Breast epithelium (tissue), 4 donors: ENCODE measurements at regions of chr1 and their contacts with region 1.

Region 1: GRCh38 chr1:167687919-167688519 is 33.8 kb upstream of the MPZL1 start:
- DNase-seq: peak; percentile 62 to 69
- H3K4me3 ChIP-seq: no peak overlapping the region
- H3K27ac ChIP-seq: no peak overlapping the region
- H3K4me1 ChIP-seq: peaks cover 0 to 6% of the 10 kb centered on the region in 2 donors
- H3K27me3 ChIP-seq: no peaks in the 10 kb centered on the region
- CTCF ChIP-seq: peak; percentile 74 to 90 (median 87)
- POLR2A ChIP-seq: no peak

Region 2: GRCh38 chr1:167599957-167600581 is 88.0 kb before region 1 on chr1:
- intact Hi-C with region 1: loop called (anchors 5 kb)
- DNase-seq: peak in 1 of 2 donors; percentile 73
- H3K4me3 ChIP-seq: no peak overlapping the region
- H3K27ac ChIP-seq: no peak overlapping the region
- H3K4me1 ChIP-seq: peaks cover 7 to 9% of the 10 kb centered on the region in 2 donors
- H3K27me3 ChIP-seq: no peaks in the 10 kb centered on the region
- CTCF ChIP-seq: peak in 2 of 3 donors; percentile 41 to 53
- POLR2A ChIP-seq: no peak

Region 3: GRCh38 chr1:167669209-167670124 is 18.6 kb before region 1 on chr1:
- intact Hi-C with region 1: no loop called
- DNase-seq: no peak
- H3K4me3 ChIP-seq: no peak overlapping the region
- H3K27ac ChIP-seq: no peak overlapping the region
- H3K4me1 ChIP-seq: peaks cover 0 to 3% of the 10 kb centered on the region in 2 donors
- H3K27me3 ChIP-seq: no peaks in the 10 kb centered on the region
- CTCF ChIP-seq: no peak
- POLR2A ChIP-seq: no peak

Region 4: GRCh38 chr1:167713330-167714081 is 25.5 kb after region 1 on chr1:
- intact Hi-C with region 1: loop called (anchors 1 kb)
- DNase-seq: no peak
- H3K4me3 ChIP-seq: peak overlapping the region; percentile 59 to 94 (median 77)
- H3K27ac ChIP-seq: peak overlapping the region; percentile 92 to 97
- H3K4me1 ChIP-seq: no peaks in the 10 kb centered on the region
- H3K27me3 ChIP-seq: no peaks in the 10 kb centered on the region
- CTCF ChIP-seq: no peak
- POLR2A ChIP-seq: no peak

Region 5: GRCh38 chr1:168195199-168196135 is 507.4 kb after region 1 on chr1:
- intact Hi-C with region 1: no loop called
- DNase-seq: no peak
- H3K4me3 ChIP-seq: no peak overlapping the region
- H3K27ac ChIP-seq: no peak overlapping the region
- H3K4me1 ChIP-seq: no peaks in the 10 kb centered on the region
- H3K27me3 ChIP-seq: no peaks in the 10 kb centered on the region
- CTCF ChIP-seq: no peak
- POLR2A ChIP-seq: no peak